ENCODE measurements at regions of chr6 and their contacts with region 1.

Region 1: GRCh38 chr6:149223904-149224351 is 93.6 kb upstream of the TAB2 start:
- DNase-seq: no peak
- ATAC-seq: no peak
- H3K4me3 ChIP-seq: no peak overlapping the region
- H3K4me3 Mint-ChIP-seq: no peak overlapping the region
- H3K27ac ChIP-seq: no peak overlapping the region
- H3K27ac Mint-ChIP-seq: peak overlapping the region in 3 of 9 donors; percentile 3 to 88 (median 33)
- H3K4me1 ChIP-seq: no peaks in the 10 kb centered on the region
- H3K4me1 Mint-ChIP-seq: peaks cover 4 to 54% (median 23%) of the 10 kb centered on the region in 7 donors
- H3K27me3 ChIP-seq: no peaks in the 10 kb centered on the region
- H3K27me3 Mint-ChIP-seq: no peaks in the 10 kb centered on the region

Region 2: DNA sequence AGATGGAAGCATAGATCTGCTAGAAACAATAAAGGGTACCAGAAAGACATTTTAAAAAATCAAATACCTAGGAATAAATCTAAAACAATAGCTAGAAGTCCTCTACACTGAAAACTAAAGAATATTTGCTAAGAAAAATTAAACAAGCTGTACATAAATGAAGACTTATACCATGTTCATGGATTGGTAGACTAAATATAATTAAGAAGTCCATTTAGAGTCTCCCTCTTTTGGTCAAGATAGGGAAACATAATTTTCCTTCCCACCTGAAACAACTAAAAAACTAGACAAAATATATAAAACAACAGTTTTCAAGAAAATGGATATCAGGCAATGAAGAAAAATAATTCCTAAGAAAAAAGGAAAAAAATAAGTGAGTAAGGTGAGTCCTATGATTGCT is 26.4 kb before region 1 on chr6:
- CTCF ChIA-PET with region 1: no interaction called
- POLR2A ChIA-PET with region 1: no interaction called
- intact Hi-C with region 1: no loop called
- DNase-seq: no peak
- ATAC-seq: no peak
- H3K4me3 ChIP-seq: no peak overlapping the region
- H3K4me3 Mint-ChIP-seq: no peak overlapping the region
- H3K27ac ChIP-seq: no peak overlapping the region
- H3K27ac Mint-ChIP-seq: peak overlapping the region in 1 of 9 donors; percentile 66
- H3K4me1 ChIP-seq: no peaks in the 10 kb centered on the region
- H3K4me1 Mint-ChIP-seq: peaks cover 0 to 38% (median under 1%) of the 10 kb centered on the region in 7 donors
- H3K27me3 ChIP-seq: no peaks in the 10 kb centered on the region
- H3K27me3 Mint-ChIP-seq: no peaks in the 10 kb centered on the region

Region 3: GRCh38 chr6:149211046-149211571 is 12.8 kb before region 1 on chr6:
- CTCF ChIA-PET with region 1: no interaction called
- POLR2A ChIA-PET with region 1: interaction called, 11 read pairs
- intact Hi-C with region 1: no loop called
- DNase-seq: peak in 1 of 9 donors; percentile 34
- ATAC-seq: peak; percentile 71
- H3K4me3 ChIP-seq: no peak overlapping the region
- H3K4me3 Mint-ChIP-seq: peak overlapping the region in 8 of 10 donors; percentile 15 to 70 (median 46)
- H3K27ac ChIP-seq: no peak overlapping the region
- H3K27ac Mint-ChIP-seq: peak overlapping the region in 5 of 9 donors; percentile 17 to 91 (median 59)
- H3K4me1 ChIP-seq: peaks cover 26 to 34% of the 10 kb centered on the region in 2 donors
- H3K4me1 Mint-ChIP-seq: peaks cover 6 to 28% (median 14%) of the 10 kb centered on the region in 7 donors
- H3K27me3 ChIP-seq: no peaks in the 10 kb centered on the region
- H3K27me3 Mint-ChIP-seq: no peaks in the 10 kb centered on the region

Region 4: DNA sequence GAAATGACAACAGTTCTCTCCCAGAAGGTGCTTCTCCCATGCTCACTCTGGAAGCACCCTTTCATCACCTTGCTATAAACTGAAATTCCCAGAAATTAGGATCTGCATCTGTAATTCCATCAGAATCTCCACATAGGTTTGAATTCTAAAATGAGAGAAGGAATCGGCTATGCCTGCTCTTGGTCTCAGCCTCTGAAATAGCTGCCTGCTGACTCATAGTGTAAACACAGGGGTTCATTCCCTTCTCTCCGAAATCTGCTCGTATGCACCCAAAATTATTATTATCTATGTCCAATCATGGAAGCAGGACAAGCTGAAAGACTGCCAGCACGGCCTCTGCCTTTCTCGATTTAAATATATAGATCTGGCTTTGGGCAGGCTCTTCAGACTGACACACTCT is 19.0 kb after region 1 on chr6:
- CTCF ChIA-PET with region 1: no interaction called
- POLR2A ChIA-PET with region 1: interaction called, 4 read pairs
- intact Hi-C with region 1: loop called in 1 of 2 experiments (anchors 1 kb)
- DNase-seq: no peak
- ATAC-seq: no peak
- H3K4me3 ChIP-seq: no peak overlapping the region
- H3K4me3 Mint-ChIP-seq: no peak overlapping the region
- H3K27ac ChIP-seq: no peak overlapping the region
- H3K27ac Mint-ChIP-seq: no peak overlapping the region
- H3K4me1 ChIP-seq: peaks cover 0 to 7% of the 10 kb centered on the region in 2 donors
- H3K4me1 Mint-ChIP-seq: peaks cover 6 to 33% (median 23%) of the 10 kb centered on the region in 7 donors
- H3K27me3 ChIP-seq: no peaks in the 10 kb centered on the region
- H3K27me3 Mint-ChIP-seq: no peaks in the 10 kb centered on the region

Measured in naive thymus-derived CD4-positive, alpha-beta T cell (primary cell).